Caco-2 (cell line): ENCODE measurements at regions of chr12 and their contacts with region 1.

Region 1: GRCh38 chr12:43937947-43938346 is 102.1 kb downstream of the TMEM117 start:
- DNase-seq: peak in 1 of 2 experiments; percentile 53
- H3K4me3 ChIP-seq: no peak overlapping the region
- H3K4me3 Mint-ChIP-seq: no peak overlapping the region
- H3K27ac Mint-ChIP-seq: no peak overlapping the region
- H3K4me1 ChIP-seq: no peaks in the 10 kb centered on the region
- H3K4me1 Mint-ChIP-seq: no peaks in the 10 kb centered on the region
- H3K27me3 ChIP-seq: no peaks in the 10 kb centered on the region
- H3K27me3 Mint-ChIP-seq: no peaks in the 10 kb centered on the region
- CTCF ChIP-seq: peak; percentile 37 to 42

Region 2: GRCh38 chr12:43776498-43776897 is 161.4 kb before region 1 on chr12:
- CTCF ChIA-PET with region 1: no interaction called
- POLR2A ChIA-PET with region 1: no interaction called
- intact Hi-C with region 1: loop called (anchors 1 kb)
- DNase-seq: peak in 1 of 2 experiments; percentile 59
- H3K4me3 ChIP-seq: no peak overlapping the region
- H3K4me3 Mint-ChIP-seq: no peak overlapping the region
- H3K27ac Mint-ChIP-seq: no peak overlapping the region
- H3K4me1 ChIP-seq: no peaks in the 10 kb centered on the region
- H3K4me1 Mint-ChIP-seq: no peaks in the 10 kb centered on the region
- H3K27me3 ChIP-seq: no peaks in the 10 kb centered on the region
- H3K27me3 Mint-ChIP-seq: no peaks in the 10 kb centered on the region
- CTCF ChIP-seq: peak; percentile 69 to 83

Region 3: GRCh38 chr12:43914923-43915468 is 23.0 kb before region 1 on chr12:
- CTCF ChIA-PET with region 1: no interaction called
- POLR2A ChIA-PET with region 1: no interaction called
- intact Hi-C with region 1: loop called (anchors 1 kb)
- DNase-seq: peak in 1 of 2 experiments; percentile 7
- H3K4me3 ChIP-seq: no peak overlapping the region
- H3K4me3 Mint-ChIP-seq: no peak overlapping the region
- H3K27ac Mint-ChIP-seq: no peak overlapping the region
- H3K4me1 ChIP-seq: no peaks in the 10 kb centered on the region
- H3K4me1 Mint-ChIP-seq: no peaks in the 10 kb centered on the region
- H3K27me3 ChIP-seq: no peaks in the 10 kb centered on the region
- H3K27me3 Mint-ChIP-seq: no peaks in the 10 kb centered on the region
- CTCF ChIP-seq: peak; percentile 31 to 41